PC-9 (cell line): ENCODE measurements at regions of chr14 and their contacts with region 1.

Region 1: DNA sequence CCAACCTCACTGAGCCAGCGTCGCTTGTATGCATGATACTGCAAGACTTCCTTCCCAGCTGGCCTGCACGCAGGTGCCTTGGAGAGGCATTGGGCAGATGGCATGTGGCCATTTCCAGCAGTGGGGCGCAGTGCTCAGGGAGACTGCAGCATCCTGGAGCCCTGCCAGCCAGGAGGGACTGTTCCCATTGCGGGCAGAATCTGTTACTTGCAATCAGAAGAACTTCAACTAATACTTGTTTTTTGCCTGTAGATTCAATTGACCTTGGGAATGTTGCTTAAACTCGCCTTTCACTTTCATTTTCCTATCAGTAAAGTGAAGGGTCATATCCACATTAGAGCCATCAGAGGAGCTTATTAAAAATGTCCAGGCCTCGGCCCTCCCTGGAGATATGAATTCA is 29.8 kb downstream of the ANKRD9 start:
- DNase-seq: no peak
- H3K4me3 ChIP-seq: no peak overlapping the region
- H3K27ac ChIP-seq: no peak overlapping the region
- H3K4me1 ChIP-seq: peaks cover 19% of the 10 kb centered on the region
- H3K27me3 ChIP-seq: no peaks in the 10 kb centered on the region
- CTCF ChIP-seq: no peak

Region 2: DNA sequence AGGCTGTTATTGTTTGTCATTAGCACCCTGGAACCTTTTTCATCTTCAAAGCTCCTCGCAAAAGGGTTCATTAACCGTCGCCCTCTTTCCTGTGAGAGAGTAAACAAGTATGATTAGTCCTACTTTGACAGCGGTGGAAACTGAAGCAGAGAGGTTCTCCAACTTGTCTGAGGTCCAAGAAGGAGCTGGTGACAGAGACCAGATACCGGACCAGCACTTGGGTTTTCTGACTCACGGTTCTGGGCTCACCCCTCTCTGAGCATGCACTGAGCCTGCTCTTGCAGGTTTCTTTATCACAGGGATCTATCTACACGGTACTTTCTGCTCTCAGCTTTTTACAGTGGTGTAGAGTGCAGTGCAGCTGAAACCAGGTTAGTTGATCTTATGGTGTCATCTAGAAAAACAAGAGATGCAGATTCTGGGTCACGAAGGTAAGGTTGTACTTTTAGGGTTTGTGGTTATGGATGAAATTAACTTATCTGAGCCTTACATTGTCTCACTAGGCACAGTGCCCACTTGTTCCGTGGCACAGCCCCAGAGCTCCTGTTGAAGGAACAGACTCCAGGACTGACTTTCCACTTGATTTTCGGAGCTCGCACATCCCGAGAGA is 656.2 kb before region 1 on chr14:
- CTCF ChIA-PET with region 1: interaction called, 18 read pairs
- POLR2A ChIA-PET with region 1: no interaction called
- intact Hi-C with region 1: no loop called
- DNase-seq: no peak
- H3K4me3 ChIP-seq: no peak overlapping the region
- H3K27ac ChIP-seq: no peak overlapping the region
- H3K4me1 ChIP-seq: no peaks in the 10 kb centered on the region
- H3K27me3 ChIP-seq: no peaks in the 10 kb centered on the region
- CTCF ChIP-seq: no peak

Region 3: DNA sequence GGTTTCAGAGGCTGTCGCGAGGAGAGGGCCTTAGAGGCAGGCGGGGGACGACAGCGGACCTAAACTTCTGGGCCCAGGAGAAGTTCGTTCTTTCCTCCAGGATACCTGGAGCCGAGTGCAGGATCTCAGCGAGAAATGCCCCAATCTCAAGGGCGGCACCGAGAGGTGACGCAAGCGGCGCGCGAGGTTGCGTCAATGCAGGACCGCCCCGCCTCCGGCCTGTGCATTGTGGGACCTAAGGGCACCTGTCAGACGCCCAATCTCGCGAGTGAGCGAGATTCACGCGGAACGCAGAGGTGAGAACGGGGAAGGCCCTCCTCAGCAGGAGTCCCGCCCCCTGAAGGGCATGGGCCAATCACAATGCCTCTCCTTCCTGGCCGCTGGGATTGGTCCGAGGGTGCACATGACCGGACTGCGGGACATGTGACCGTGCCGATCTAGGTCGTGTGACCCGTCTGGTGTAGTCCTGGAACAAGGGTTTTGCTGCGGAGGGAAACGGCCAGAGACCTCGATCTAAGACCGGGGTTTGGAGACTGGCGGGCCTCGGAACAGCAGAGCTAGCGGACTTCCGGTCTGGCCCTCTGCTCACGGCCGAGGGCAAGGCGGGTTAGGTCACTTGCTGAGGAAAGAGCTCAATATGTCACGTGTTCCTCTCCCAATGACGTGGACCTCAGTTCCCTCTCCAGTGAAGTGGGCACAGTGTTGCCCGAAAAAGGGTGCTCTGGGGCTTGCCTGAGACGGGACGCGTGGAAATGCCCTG is 531.7 kb before region 1 on chr14:
- CTCF ChIA-PET with region 1: no interaction called
- POLR2A ChIA-PET with region 1: interaction called, 16 read pairs
- intact Hi-C with region 1: no loop called
- DNase-seq: peak; percentile 100
- H3K4me3 ChIP-seq: peak overlapping the region; percentile 83
- H3K27ac ChIP-seq: peak overlapping the region; percentile 93
- H3K4me1 ChIP-seq: peaks cover 20% of the 10 kb centered on the region
- H3K27me3 ChIP-seq: no peaks in the 10 kb centered on the region
- CTCF ChIP-seq: no peak

Region 4: DNA sequence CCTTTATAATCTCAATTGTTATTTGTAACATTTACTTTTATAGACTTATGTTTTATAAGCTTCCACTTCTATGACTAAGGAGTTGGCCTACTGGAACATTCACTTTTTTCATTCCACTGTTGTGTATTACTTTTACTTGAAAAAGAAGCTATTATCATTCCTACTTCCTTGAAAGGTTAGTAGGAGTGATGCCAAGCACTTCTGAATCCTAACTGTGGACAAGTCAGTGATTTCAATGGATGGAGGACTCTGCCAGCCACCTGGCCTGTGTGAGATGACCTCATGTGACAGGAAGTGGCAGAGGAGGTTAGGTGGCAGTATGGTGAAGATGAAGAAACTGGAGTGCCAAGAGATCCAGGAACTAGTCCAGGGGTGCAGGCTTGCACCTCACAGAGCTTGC is 71.1 kb before region 1 on chr14:
- CTCF ChIA-PET with region 1: interaction called, 23 read pairs
- POLR2A ChIA-PET with region 1: no interaction called
- intact Hi-C with region 1: no loop called
- DNase-seq: no peak
- H3K4me3 ChIP-seq: no peak overlapping the region
- H3K27ac ChIP-seq: no peak overlapping the region
- H3K4me1 ChIP-seq: no peaks in the 10 kb centered on the region
- H3K27me3 ChIP-seq: no peaks in the 10 kb centered on the region
- CTCF ChIP-seq: no peak

Region 5: DNA sequence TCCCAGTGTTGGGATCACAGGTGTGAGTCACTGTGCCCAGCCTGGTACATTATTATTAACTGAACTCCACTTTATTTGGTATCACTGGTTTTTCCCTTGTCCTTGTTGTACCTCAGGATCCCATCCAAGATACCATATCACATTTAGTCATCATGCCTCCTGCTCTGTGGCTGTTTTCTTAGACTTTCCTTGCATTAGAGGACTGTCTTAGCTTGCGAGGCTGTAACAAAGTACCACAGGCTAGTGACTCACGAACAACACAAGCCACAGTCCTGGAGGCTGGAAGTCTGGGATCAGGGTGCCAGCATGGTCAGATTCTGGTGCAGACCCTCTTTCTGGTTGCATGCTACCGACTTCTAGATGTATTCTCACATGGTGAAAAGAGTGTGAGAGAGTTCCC is 1161.4 kb after region 1 on chr14:
- CTCF ChIA-PET with region 1: interaction called, 13 read pairs
- POLR2A ChIA-PET with region 1: no interaction called
- intact Hi-C with region 1: no loop called
- DNase-seq: no peak
- H3K4me3 ChIP-seq: no peak overlapping the region
- H3K27ac ChIP-seq: no peak overlapping the region
- H3K4me1 ChIP-seq: no peaks in the 10 kb centered on the region
- H3K27me3 ChIP-seq: no peaks in the 10 kb centered on the region
- CTCF ChIP-seq: no peak